WTC11 (cell line): ENCODE measurements at regions of chr16 and their contacts with region 1.

Region 1: DNA sequence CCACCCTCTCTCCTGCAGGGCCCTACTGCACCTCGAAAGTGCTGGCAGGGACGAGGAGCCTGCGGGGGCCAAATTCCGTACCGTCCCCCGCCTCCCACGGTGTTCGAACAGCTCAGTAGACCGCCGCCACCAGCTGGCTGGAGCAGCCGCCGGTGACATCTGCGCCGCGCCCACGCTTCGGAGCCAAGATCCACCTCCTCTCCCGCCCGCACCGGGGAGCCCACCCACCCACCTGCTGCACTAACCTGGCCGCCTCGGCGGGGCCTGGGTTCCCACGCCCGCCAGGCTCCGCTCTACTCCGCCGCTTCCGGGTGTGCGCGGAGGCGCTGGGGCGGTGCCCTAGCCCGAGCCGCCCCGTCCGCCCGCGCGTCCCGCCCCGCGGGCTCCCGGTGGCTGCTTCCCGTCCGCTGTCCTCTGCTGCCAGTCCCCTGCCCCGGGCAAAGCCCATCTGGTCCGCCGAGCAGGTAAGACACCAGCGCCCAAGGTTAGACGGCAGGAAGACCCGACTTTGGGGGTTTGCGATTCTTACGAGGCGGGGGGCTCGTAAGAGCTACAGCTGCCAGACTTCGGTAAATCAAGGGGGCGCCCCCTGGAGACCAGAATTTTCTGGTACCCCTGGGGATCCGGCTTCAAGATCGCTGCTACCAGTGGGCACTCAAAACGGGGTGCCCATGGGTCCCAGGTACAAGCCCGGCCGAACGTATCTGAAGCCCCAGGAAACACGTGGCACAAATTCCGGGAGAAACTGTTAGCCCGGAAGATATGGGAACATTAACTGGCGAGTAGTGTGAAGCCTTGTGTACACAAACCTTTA is at the starts of genes FBXL8 and TRADD:
- DNase-seq: peak; percentile 67
- ATAC-seq: 0 out of 2 replicates have a peak, but pooled peaks have one; percentile 2
- H3K4me3 Mint-ChIP-seq: peak within 1 kb of the TSS; percentile 74
- H3K27ac Mint-ChIP-seq: no peak within 1 kb of the TSS
- H3K4me1 Mint-ChIP-seq: peaks cover 28% of the 10 kb centered on the region
- H3K27me3 Mint-ChIP-seq: peaks cover 99% of the 10 kb centered on the region
- CTCF ChIP-seq: 0 out of 2 replicates have a peak, but pooled peaks have one; percentile 28
- total RNA-seq, gene FBXL8: 1.1 to 1.2 TPM (median 1.1 TPM) in 3 replicates
- total RNA-seq, gene TRADD: 1.4 to 2.1 TPM (median 1.7 TPM) in 3 replicates

Region 2: DNA sequence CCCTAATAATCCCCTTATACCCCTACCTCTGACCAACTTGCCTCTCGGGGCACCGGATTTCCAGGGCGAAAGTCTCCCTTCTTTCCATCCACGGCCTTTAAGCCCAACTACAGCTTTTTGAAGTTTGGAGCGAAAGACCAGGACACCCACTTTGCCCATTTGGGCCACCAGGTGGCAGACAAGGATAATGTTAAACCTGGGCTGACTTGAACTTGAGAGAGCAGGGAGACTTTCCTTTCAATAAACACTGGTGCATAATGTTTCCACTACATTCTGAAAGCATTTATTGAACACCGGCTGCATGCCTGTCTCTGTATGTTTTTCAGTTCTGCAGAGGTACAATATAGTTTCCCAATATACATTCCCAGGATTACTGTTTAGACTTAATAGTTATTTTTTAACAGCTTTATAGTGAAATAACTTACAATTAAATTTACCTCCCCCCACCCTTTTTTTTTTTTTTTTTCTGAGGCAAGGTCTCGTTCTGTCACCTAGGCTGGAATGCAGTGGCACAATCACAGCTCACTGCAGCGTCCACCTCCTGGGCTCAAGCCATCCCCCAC is 205.6 kb before region 1 on chr16:
- CTCF ChIA-PET with region 1: interaction called, 51 read pairs
- POLR2A ChIA-PET with region 1: no interaction called
- DNase-seq: peak; percentile 85
- ATAC-seq: peak; percentile 88
- H3K4me3 Mint-ChIP-seq: no peak overlapping the region
- H3K27ac Mint-ChIP-seq: no peak overlapping the region
- H3K4me1 Mint-ChIP-seq: peaks cover 4% of the 10 kb centered on the region
- H3K27me3 Mint-ChIP-seq: peaks cover 40% of the 10 kb centered on the region
- CTCF ChIP-seq: peak; percentile 62; the same call in 1 of the 2 replicates

Region 3: GRCh38 chr16:66977341-66978113 is 182.3 kb before region 1 on chr16:
- CTCF ChIA-PET with region 1: interaction called, 15 read pairs
- POLR2A ChIA-PET with region 1: no interaction called
- DNase-seq: peak; percentile 95
- ATAC-seq: peak; percentile 95
- H3K4me3 Mint-ChIP-seq: no peak overlapping the region
- H3K27ac Mint-ChIP-seq: no peak overlapping the region
- H3K4me1 Mint-ChIP-seq: peaks cover 6% of the 10 kb centered on the region
- H3K27me3 Mint-ChIP-seq: no peaks in the 10 kb centered on the region; the same call in 1 of the 2 replicates
- CTCF ChIP-seq: peak; percentile 96

Region 4: GRCh38 chr16:67017810-67018488 is 141.9 kb before region 1 on chr16:
- CTCF ChIA-PET with region 1: interaction called, 79 read pairs
- POLR2A ChIA-PET with region 1: interaction called, 4 read pairs
- DNase-seq: peak; percentile 95
- ATAC-seq: peak; percentile 96
- H3K4me3 Mint-ChIP-seq: no peak overlapping the region
- H3K27ac Mint-ChIP-seq: no peak overlapping the region
- H3K4me1 Mint-ChIP-seq: no peaks in the 10 kb centered on the region
- H3K27me3 Mint-ChIP-seq: peaks cover 41% of the 10 kb centered on the region
- CTCF ChIP-seq: peak; percentile 85

Region 5: GRCh38 chr16:67087803-67088202 is 72.0 kb before region 1 on chr16:
- CTCF ChIA-PET with region 1: no interaction called
- POLR2A ChIA-PET with region 1: no interaction called
- DNase-seq: no peak
- ATAC-seq: no peak
- H3K4me3 Mint-ChIP-seq: no peak overlapping the region
- H3K27ac Mint-ChIP-seq: no peak overlapping the region
- H3K4me1 Mint-ChIP-seq: no peaks in the 10 kb centered on the region
- H3K27me3 Mint-ChIP-seq: no peaks in the 10 kb centered on the region
- CTCF ChIP-seq: no peak

Region 6: GRCh38 chr16:67115639-67116038 is 44.2 kb before region 1 on chr16:
- CTCF ChIA-PET with region 1: interaction called, 10 read pairs
- POLR2A ChIA-PET with region 1: no interaction called
- DNase-seq: no peak
- ATAC-seq: no peak
- H3K4me3 Mint-ChIP-seq: no peak overlapping the region
- H3K27ac Mint-ChIP-seq: no peak overlapping the region
- H3K4me1 Mint-ChIP-seq: peaks cover 16% of the 10 kb centered on the region
- H3K27me3 Mint-ChIP-seq: no peaks in the 10 kb centered on the region
- CTCF ChIP-seq: no peak

Region 7: GRCh38 chr16:67198238-67198734 is 38.5 kb after region 1 on chr16:
- CTCF ChIA-PET with region 1: interaction called, 23 read pairs
- POLR2A ChIA-PET with region 1: no interaction called
- DNase-seq: peak; percentile 53
- ATAC-seq: peak; percentile 13
- H3K4me3 Mint-ChIP-seq: peak overlapping the region; percentile 55
- H3K27ac Mint-ChIP-seq: peak overlapping the region; percentile 85; the same call in 1 of the 2 replicates
- H3K4me1 Mint-ChIP-seq: peaks cover 13% of the 10 kb centered on the region
- H3K27me3 Mint-ChIP-seq: no peaks in the 10 kb centered on the region
- CTCF ChIP-seq: no peak